ENCODE measurements at regions of chr15 and their contacts with region 1.

Region 1: DNA sequence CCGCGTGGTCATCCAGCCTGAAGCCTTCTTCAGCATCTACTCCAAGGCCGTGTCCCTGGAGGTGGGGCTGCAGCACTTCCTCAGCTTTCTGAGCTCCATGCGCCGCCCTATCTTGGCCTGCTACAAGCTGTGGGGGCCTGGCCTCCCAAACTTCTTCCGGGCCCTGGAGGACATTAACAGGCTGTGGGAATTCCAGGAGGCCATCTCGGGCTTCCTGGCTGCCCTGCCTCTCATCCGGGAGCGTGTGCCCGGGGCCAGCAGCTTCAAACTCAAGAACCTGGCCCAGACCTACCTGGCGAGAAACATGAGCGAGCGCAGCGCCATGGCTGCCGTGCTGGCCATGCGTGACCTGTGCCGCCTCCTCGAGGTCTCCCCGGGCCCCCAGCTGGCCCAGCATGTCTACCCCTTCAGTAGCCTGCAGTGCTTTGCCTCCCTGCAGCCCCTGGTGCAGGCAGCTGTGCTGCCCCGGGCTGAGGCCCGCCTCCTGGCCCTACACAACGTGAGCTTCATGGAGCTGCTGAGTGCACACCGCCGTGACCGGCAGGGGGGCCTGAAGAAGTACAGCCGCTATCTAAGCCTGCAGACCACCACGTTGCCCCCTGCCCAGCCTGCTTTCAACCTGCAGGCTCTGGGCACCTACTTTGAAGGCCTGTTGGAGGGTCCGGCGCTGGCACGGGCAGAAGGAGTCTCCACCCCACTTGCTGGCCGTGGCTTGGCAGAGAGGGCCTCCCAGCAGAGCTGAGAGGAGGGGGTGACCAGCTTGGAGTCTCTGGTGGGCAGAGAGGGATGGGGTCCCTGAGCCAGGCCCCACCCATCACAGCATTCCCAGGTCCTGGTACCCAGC is 37.9 kb downstream of the GOLGA6A start:
- DNase-seq: no peak
- ATAC-seq: no peak
- H3K4me3 ChIP-seq: no peak overlapping the region
- H3K4me3 Mint-ChIP-seq: no peak overlapping the region
- H3K27ac ChIP-seq: no peak overlapping the region
- H3K27ac Mint-ChIP-seq: no peak overlapping the region
- H3K4me1 ChIP-seq: peaks cover 8 to 14% of the 10 kb centered on the region in 2 donors
- H3K4me1 Mint-ChIP-seq: peaks cover 7 to 17% (median 11%) of the 10 kb centered on the region in 7 donors
- H3K27me3 ChIP-seq: no peaks in the 10 kb centered on the region
- H3K27me3 Mint-ChIP-seq: no peaks in the 10 kb centered on the region

Region 2: DNA sequence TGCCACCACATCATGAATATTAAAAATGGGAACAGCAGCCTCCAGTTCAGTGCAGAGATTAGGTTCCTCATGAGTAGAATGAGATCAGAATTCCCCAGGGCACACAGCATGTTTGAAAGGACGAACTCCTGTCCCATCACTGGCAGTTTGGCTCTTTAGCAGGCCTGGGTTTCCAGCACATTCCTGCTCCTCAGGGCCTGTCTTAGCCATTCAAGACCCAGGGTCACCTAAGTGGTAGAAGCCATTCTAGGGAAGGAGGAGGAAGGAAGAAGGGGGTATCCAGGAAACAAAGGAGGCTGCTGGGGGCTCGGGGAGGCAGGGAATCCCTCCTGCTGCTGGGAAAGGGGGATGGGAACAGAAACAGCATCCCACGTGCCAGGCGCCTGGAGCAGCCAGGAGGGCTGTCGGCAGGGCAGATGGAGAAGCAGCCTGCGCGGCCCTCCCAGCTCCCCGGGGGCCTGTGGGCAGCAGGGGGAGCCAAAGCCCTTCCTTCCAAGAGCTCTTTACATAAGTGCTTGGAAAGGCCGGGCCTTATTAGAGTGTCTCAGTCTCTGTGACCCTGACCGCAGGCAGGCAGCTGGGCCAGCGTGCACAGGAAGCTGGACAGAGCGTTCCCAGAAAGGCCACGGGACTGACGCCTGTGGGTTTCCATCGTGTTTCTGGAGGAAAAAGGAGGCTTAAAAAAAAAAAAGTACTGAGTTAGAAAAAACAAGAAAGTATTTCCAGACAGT is 93.5 kb before region 1 on chr15:
- CTCF ChIA-PET with region 1: interaction called, 5 read pairs
- POLR2A ChIA-PET with region 1: no interaction called
- intact Hi-C with region 1: loop called in 1 of 2 experiments (anchors 1 kb)
- DNase-seq: peak; percentile 53 to 76 (median 71)
- ATAC-seq: peak; percentile 89
- H3K4me3 ChIP-seq: no peak overlapping the region
- H3K4me3 Mint-ChIP-seq: peak overlapping the region in 1 of 10 donors; percentile 23
- H3K27ac ChIP-seq: no peak overlapping the region
- H3K27ac Mint-ChIP-seq: peak overlapping the region; percentile 10 to 97 (median 83)
- H3K4me1 ChIP-seq: peaks cover 0 to 6% of the 10 kb centered on the region in 2 donors
- H3K4me1 Mint-ChIP-seq: peaks cover 4 to 9% (median 7%) of the 10 kb centered on the region in 7 donors
- H3K27me3 ChIP-seq: no peaks in the 10 kb centered on the region
- H3K27me3 Mint-ChIP-seq: peaks cover 0 to 3% (median 0%) of the 10 kb centered on the region in 5 donors

Region 3: DNA sequence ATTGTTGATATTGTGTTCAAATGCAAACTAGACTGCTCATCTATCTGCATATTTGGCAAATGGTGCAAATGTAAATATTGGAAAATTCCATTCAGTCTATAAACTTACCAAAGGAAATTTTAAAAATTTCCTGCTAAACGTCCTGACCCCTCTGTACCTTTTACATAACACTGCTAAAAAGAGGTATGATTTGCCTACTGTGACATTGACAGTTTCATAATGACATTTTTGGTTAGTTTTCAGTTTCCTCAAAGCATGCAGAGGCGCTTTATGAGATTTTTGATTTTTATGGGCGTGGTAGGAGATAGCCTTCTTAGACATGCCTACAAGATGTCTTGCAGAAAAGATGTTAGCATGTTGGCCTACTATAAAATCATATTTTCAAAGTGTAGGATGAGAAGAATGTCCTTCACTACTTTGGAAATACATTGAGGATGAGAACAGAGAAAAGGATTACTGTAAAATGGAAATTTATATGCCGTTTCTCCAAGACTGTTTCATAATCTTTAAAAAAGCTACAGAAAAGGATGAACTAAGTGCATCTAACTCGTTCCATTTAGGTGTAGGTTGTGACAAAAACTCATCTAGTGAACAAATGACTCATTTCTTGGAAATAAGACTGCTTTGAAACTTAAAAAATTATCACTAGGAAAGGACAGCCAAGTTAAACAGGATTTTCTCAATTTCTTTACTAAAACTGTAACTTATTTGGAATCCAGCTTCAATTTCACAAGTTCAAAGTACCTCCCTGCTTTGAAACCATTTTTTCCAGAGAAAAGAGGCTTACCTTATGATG is 114.6 kb after region 1 on chr15:
- CTCF ChIA-PET with region 1: no interaction called
- POLR2A ChIA-PET with region 1: no interaction called
- intact Hi-C with region 1: no loop called
- DNase-seq: no peak
- ATAC-seq: no peak
- H3K4me3 ChIP-seq: no peak overlapping the region
- H3K4me3 Mint-ChIP-seq: no peak overlapping the region
- H3K27ac ChIP-seq: no peak overlapping the region
- H3K27ac Mint-ChIP-seq: no peak overlapping the region
- H3K4me1 ChIP-seq: no peaks in the 10 kb centered on the region
- H3K4me1 Mint-ChIP-seq: peaks cover 0 to 28% (median 9%) of the 10 kb centered on the region in 7 donors
- H3K27me3 ChIP-seq: no peaks in the 10 kb centered on the region
- H3K27me3 Mint-ChIP-seq: peaks cover 11 to 40% (median 19%) of the 10 kb centered on the region in 5 donors

Region 4: GRCh38 chr15:74835307-74835823 is 790.9 kb after region 1 on chr15:
- CTCF ChIA-PET with region 1: no interaction called
- POLR2A ChIA-PET with region 1: no interaction called
- intact Hi-C with region 1: no loop called
- DNase-seq: peak in 5 of 9 donors; percentile 14 to 64 (median 21)
- ATAC-seq: peak; percentile 72
- H3K4me3 ChIP-seq: no peak overlapping the region
- H3K4me3 Mint-ChIP-seq: no peak overlapping the region
- H3K27ac ChIP-seq: no peak overlapping the region
- H3K27ac Mint-ChIP-seq: peak overlapping the region in 3 of 9 donors; percentile 5 to 48 (median 28)
- H3K4me1 ChIP-seq: no peaks in the 10 kb centered on the region
- H3K4me1 Mint-ChIP-seq: peaks cover 0 to 8% (median 4%) of the 10 kb centered on the region in 7 donors
- H3K27me3 ChIP-seq: no peaks in the 10 kb centered on the region
- H3K27me3 Mint-ChIP-seq: no peaks in the 10 kb centered on the region